Activated T-helper 2 cell treated with anti-CD3 and anti-CD28 coated beads, Interferon-gamma antibody, Interleukin-2, Interleukin-4, amounts not matched to agents 10 μg/mL and 5 μg/mL and 100 μg/mL, durations not matched to agents 14 hours and 24 hours and 36 hours (primary cell): ENCODE measurements at regions of chr3 and their contacts with region 1.

Region 1: GRCh38 chr3:138935848-138936740 is 10.8 kb downstream of the FOXL2 start:
- DNase-seq: peak; percentile 60
- H3K4me3 Mint-ChIP-seq: peak overlapping the region; percentile 47
- H3K27ac Mint-ChIP-seq: no peak overlapping the region
- H3K4me1 Mint-ChIP-seq: peaks cover 12% of the 10 kb centered on the region
- H3K27me3 Mint-ChIP-seq: peaks cover 75% of the 10 kb centered on the region

Region 2: GRCh38 chr3:137770835-137771399 is 1165.2 kb before region 1 on chr3:
- intact Hi-C with region 1: loop called (anchors 2 kb)
- DNase-seq: no peak
- H3K4me3 Mint-ChIP-seq: no peak overlapping the region
- H3K27ac Mint-ChIP-seq: no peak overlapping the region
- H3K4me1 Mint-ChIP-seq: peaks cover 2% of the 10 kb centered on the region
- H3K27me3 Mint-ChIP-seq: peaks cover 84% of the 10 kb centered on the region

Region 3: DNA sequence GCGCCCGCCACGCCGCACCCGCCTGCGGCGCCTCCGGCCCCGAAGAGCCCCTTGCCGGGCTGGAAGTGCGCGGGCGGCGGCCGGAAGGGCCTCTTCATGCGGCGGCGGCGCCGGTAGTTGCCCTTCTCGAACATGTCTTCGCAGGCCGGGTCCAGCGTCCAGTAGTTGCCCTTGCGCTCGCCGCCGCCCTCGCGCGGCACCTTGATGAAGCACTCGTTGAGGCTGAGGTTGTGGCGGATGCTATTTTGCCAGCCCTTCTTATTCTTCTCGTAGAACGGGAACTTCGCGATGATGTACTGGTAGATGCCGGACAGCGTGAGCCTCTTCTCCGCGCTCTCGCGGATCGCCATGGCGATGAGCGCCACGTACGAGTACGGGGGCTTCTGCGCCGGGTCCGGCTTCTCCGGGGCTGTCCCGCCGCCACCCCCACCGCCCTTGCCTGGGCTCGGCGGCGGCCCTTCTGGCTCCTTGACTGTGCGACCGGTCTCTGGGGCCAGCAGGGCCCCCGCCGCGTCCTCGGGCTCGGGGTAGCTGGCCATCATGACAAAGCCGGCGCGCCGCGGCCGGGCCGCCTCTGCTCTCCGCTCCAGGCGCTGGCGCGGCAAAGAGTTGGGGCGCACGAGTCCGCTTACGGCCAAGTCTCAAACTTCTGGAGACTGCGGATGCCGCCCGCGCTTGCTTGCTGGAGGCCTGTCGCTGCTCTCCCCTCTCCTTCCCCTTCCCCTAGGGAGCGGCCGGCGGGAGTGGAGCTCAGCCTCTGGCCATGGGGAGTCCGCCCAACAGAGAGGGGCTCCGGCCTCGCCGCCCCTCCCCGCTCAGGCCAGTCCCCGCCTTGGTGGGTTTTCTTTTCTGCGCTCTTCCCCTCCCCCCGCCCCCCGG is 10.3 kb after region 1 on chr3:
- intact Hi-C with region 1: loop called (anchors 1 kb)
- DNase-seq: no peak
- H3K4me3 Mint-ChIP-seq: no peak overlapping the region
- H3K27ac Mint-ChIP-seq: no peak overlapping the region
- H3K4me1 Mint-ChIP-seq: peaks cover 18% of the 10 kb centered on the region
- H3K27me3 Mint-ChIP-seq: peaks cover 78% of the 10 kb centered on the region